ENCODE measurements at regions of chr14 and their contacts with region 1.

Region 1: GRCh38 chr14:51094901-51095853 is at the start of gene TRIM9:
- DNase-seq: peak; percentile 96 to 100 (median 99)
- H3K4me3 ChIP-seq: peak within 1 kb of the TSS; percentile 57 to 98 (median 85)
- H3K27ac ChIP-seq: peak within 1 kb of the TSS; percentile 92 to 100 (median 99)
- H3K27me3 ChIP-seq: no peaks in the 10 kb centered on the region
- CTCF ChIP-seq: peak in 28 of 56 donors; percentile 5 to 48 (median 22)
- total RNA-seq, gene TRIM9: 145 to 347 (median 241) TPM

Region 2: GRCh38 chr14:50954811-50955372 is 140.3 kb before region 1 on chr14:
- intact Hi-C with region 1: loop called (anchors 1 to 10 kb)
- DNase-seq: peak in 2 of 10 donors; percentile 28 to 30
- H3K4me3 ChIP-seq: no peak overlapping the region
- H3K27ac ChIP-seq: peak overlapping the region in 42 of 59 donors; percentile 6 to 74 (median 48)
- H3K27me3 ChIP-seq: no peaks in the 10 kb centered on the region
- CTCF ChIP-seq: peak; percentile 42 to 87 (median 78)

Region 3: DNA sequence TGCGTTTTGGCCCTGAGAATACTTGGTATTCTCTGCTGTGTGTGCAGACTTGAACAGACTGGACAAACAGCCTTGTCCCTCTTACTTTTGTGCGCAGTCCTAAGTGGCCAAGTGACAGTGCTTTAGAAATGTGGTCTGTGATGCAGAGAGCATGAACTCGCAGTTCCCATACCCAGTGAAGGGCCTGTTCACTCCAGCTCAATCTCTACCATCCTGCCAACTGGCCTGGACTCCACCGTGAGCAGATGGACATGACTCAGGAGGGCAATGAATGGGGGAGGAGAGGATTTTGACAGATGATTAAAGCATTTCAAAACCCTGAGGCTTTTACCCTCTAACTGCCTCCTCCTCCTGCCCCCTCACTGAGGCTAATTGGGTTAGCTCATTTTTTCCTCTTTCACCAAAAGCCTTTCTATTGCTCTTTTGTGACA is 88.4 kb before region 1 on chr14:
- intact Hi-C with region 1: loop called (anchors 2 to 5 kb)
- DNase-seq: peak in 9 of 10 donors; percentile 66 to 86 (median 74)
- H3K4me3 ChIP-seq: peak overlapping the region in 9 of 59 donors; percentile 4 to 32 (median 17)
- H3K27ac ChIP-seq: peak overlapping the region; percentile 59 to 92 (median 83)
- H3K27me3 ChIP-seq: no peaks in the 10 kb centered on the region
- CTCF ChIP-seq: peak in 2 of 56 donors; percentile 18 to 24

Region 4: DNA sequence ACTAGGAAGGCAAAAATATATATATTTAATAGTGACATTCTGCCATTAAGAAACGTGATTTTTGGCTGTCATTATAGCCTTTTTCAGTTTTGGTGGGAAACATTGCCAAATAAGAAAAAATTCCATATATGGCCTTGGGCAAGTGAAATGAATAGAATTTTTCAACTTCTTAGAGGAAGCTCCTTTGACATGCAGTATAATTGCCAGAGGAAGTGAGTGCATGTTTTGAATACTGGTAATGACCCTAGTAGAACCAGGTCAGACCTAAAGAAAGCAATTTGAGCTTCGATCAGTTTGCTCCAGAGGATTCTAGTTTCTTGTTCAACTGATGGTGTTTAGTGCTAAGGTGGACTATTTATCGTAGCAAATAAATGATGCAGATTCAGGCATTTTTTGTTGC is 25.9 kb after region 1 on chr14:
- intact Hi-C with region 1: no loop called
- DNase-seq: no peak
- H3K4me3 ChIP-seq: no peak overlapping the region
- H3K27ac ChIP-seq: peak overlapping the region in 1 of 59 donors; percentile 1
- H3K27me3 ChIP-seq: no peaks in the 10 kb centered on the region
- CTCF ChIP-seq: no peak

Region 5: GRCh38 chr14:51180577-51180976 is 85.4 kb after region 1 on chr14:
- intact Hi-C with region 1: loop called in 1 of 2 experiments (anchors 10 kb)
- DNase-seq: no peak
- H3K4me3 ChIP-seq: no peak overlapping the region
- H3K27ac ChIP-seq: peak overlapping the region in 2 of 59 donors; percentile 4 to 34
- H3K27me3 ChIP-seq: no peaks in the 10 kb centered on the region
- CTCF ChIP-seq: no peak

Region 6: DNA sequence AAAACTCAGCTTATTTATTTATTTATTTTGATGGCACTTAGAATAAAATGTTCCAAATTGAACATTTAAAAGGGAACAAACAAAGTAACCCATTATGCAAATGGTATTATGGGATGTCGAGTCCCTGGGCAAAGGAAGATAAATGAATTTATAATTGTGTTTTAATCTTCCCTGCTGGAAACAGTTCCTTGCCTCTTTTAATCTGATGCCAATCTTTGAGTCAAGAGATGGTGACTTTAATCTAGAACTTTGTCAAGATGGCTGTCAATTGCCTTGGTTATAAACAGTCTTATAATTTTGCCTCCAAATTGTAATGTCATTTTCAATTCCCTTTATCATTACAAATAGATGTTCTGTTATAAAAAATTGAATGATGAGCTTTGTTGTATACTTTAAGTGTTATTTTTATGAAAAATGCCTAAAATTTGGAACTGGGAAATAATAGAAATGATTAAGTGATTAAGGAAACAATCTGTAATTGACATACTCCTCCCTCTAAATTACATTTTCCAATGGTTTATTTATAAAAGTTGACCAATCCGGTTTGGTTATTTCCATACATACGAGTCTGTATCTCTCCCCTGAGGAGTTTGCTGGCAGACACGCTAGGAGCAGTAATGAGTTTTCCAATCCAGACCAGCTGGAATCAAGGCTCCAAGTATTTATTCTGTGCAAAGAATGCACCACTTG is 421.7 kb after region 1 on chr14:
- intact Hi-C with region 1: no loop called
- DNase-seq: no peak
- H3K4me3 ChIP-seq: no peak overlapping the region
- H3K27ac ChIP-seq: no peak overlapping the region
- H3K27me3 ChIP-seq: peaks cover 0 to 6% (median 0%) of the 10 kb centered on the region in 45 donors
- CTCF ChIP-seq: no peak